ENCODE measurements at regions of chr16 and their contacts with region 1.

Region 1: GRCh38 chr16:89873972-89874689 is 739 bp downstream of the TCF25 start:
- DNase-seq: peak; percentile 88
- H3K4me3 Mint-ChIP-seq: peak overlapping the region; percentile 90
- H3K27ac Mint-ChIP-seq: peak overlapping the region; percentile 99
- H3K4me1 Mint-ChIP-seq: peaks cover 11% of the 10 kb centered on the region
- H3K27me3 Mint-ChIP-seq: peaks cover 2% of the 10 kb centered on the region

Region 2: DNA sequence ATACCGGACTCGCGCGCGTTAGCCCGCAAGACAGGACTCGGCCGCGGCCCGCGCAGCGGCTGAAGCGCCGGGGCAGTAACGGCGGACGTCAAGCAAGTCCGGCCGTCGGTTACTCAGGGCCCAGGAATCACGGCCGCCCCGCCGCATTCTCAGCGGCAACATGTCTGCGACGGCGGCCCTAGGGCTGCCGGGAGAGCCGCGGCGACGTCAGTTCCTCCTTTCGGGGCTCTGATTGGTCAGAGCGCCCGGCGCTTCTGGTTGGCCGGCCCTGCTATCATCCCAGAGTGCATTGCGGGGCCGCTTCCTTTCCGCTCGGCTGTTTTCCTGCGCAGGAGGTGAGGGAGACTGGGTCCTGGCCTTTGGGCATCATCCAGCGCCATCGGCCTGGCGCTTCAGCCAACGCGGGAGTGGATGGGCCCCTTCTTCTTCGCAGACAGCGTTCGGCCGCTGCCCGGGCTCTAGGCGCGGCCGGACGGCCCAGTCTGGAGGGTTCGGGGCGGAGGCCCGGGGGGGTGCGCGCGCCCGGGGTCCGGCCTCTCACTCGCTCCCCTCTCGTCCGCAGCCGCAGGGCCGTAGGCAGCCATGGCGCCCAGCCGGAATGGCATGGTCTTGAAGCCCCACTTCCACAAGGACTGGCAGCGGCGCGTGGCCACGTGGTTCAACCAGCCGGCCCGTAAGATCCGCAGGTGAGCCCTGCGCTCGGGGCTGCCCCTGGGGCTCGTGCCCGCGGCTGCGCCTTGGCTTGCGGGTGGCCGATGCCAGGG is 313.6 kb before region 1 on chr16 and contains the start of gene RPL13:
- intact Hi-C with region 1: loop called (anchors 1 kb)
- DNase-seq: peak; percentile 91
- H3K4me3 Mint-ChIP-seq: peak within 1 kb of the TSS; percentile 98
- H3K27ac Mint-ChIP-seq: peak within 1 kb of the TSS; percentile 99
- H3K4me1 Mint-ChIP-seq: peaks cover 48% of the 10 kb centered on the region
- H3K27me3 Mint-ChIP-seq: no peaks in the 10 kb centered on the region
- total RNA-seq, gene RPL13: 2,076 and 2,133 TPM in 2 replicates

Region 3: DNA sequence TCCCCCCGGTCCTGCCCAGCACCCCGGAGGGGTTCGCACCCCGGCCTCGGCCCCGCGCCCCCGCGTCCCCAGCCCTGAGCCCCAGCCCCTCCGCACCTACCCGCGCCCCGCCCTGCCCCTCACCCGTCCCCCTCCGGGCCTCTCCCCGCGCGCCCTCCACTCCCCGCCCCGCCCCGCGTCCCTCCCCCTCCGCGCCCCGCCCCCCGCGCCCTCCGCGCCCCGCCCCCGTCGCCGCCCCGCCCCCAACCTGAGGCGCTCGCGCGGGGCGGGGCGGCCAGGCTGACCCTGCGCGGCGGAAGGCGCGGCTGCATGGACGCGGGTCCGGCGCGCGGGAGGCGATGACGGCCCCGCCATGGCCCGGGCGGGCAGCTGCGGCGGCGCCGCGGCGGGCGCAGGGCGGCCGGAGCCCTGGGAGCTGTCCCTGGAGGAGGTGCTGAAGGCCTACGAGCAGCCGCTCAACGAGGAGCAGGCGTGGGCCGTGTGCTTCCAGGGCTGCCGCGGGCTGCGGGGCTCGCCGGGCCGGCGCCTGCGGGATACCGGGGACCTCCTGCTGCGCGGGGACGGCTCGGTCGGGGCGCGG is 45.8 kb before region 1 on chr16 and contains the start of gene SPIRE2:
- intact Hi-C with region 1: loop called (anchors 1 kb)
- DNase-seq: peak; percentile 76
- H3K4me3 Mint-ChIP-seq: peak within 1 kb of the TSS; percentile 75
- H3K27ac Mint-ChIP-seq: no peak within 1 kb of the TSS
- H3K4me1 Mint-ChIP-seq: no peaks in the 10 kb centered on the region
- H3K27me3 Mint-ChIP-seq: peaks cover 40% of the 10 kb centered on the region
- total RNA-seq, gene SPIRE2: 1.5 and 2.7 TPM in 2 replicates

Region 4: GRCh38 chr16:89922884-89923690 is 49.0 kb after region 1 on chr16 and contains the start of gene TUBB3:
- intact Hi-C with region 1: loop called (anchors 1 kb)
- DNase-seq: peak; percentile 69
- H3K4me3 Mint-ChIP-seq: peak within 1 kb of the TSS; percentile 83
- H3K27ac Mint-ChIP-seq: peak within 1 kb of the TSS; percentile 15
- H3K4me1 Mint-ChIP-seq: peaks cover 7% of the 10 kb centered on the region
- H3K27me3 Mint-ChIP-seq: peaks cover 29% of the 10 kb centered on the region
- total RNA-seq, gene TUBB3: 2.0 and 2.6 TPM in 2 replicates

Measured in activated T-helper 1 cell treated with anti-CD3 and anti-CD28 coated beads, Interleukin-12 subunit alpha, Interleukin-12 subunit beta, Interleukin-2, Interleukin-4 antibody, amounts not matched to agents 30 ng/mL and 10 ng/mL and 1 ng/mL, durations not matched to agents 14 hours and 24 hours and 36 hours (primary cell).